ENCODE measurements at regions of chr12 and their contacts with region 1.

Region 1: DNA sequence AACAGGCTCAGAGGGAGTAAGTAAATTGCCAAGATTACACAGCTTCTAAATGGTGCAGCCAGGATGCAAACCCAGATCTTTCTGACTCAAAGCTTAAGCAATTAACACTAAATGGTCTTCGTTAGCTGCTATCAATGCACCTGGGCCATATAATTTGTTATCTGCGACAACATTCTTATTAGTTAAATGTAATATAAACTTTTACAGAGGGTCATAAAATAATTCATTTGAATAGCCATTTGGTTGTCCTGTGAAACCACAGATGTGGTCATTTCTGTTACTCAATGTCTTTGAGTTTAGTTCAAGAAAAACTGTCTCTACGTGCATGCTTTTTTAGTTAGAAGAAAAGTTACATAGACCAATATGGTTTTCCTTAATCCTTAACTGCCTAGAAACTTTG is 22.1 kb upstream of the NAP1L1 start:
- DNase-seq: no peak
- ATAC-seq: no peak
- H3K4me3 ChIP-seq: no peak overlapping the region
- H3K27ac ChIP-seq: no peak overlapping the region
- H3K4me1 ChIP-seq: peaks cover 2% of the 10 kb centered on the region
- H3K27me3 ChIP-seq: no peaks in the 10 kb centered on the region
- CTCF ChIP-seq: no peak
- POLR2A ChIP-seq: no peak
- RAD21 ChIP-seq: no peak

Region 2: DNA sequence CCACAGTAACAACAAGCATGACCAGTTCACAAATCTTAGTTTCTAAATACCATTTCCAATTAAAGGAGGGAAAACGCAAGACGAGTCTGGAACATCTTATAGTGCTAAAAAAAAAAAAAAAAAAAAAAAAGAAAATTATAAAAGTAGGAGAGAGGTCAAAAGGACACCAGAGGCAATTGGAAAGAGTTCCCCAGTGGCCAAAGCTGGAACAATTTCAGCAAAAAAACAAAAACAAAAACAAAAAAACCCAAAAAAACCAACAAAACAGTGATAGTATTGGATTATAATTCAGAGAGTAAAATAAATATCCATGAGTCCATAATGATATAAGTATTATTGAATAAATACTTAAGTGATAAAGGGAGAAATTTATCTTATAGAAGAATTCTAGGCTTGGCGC is 11.9 kb before region 1 on chr12:
- CTCF ChIA-PET with region 1: no interaction called
- POLR2A ChIA-PET with region 1: interaction called, 18 read pairs
- dilution Hi-C with region 1: no loop called
- in situ Hi-C with region 1: no loop called
- intact Hi-C with region 1: no loop called
- DNase-seq: no peak
- ATAC-seq: no peak
- H3K4me3 ChIP-seq: no peak overlapping the region
- H3K27ac ChIP-seq: no peak overlapping the region
- H3K4me1 ChIP-seq: no peaks in the 10 kb centered on the region
- H3K27me3 ChIP-seq: no peaks in the 10 kb centered on the region
- CTCF ChIP-seq: no peak
- POLR2A ChIP-seq: no peak
- RAD21 ChIP-seq: no peak

Region 3: DNA sequence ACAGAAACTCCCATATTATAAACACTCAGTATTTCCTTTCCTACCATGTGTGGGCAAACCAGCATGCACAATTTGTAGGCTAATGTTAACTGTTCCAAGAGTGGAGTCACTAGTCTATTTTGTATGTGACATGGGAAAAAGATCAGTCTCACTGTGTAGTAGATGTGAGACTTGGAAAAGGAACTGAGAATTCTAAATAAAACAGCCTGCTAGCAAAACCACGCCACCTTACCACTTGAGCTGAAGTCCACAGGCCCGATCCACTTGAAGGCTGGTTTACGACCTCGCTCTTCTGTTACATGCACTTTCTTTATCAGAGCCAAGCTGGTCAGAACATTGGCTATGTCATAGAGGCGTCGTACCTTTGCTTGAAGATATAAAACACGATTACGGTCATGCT is 936.2 kb after region 1 on chr12:
- CTCF ChIA-PET with region 1: no interaction called
- POLR2A ChIA-PET with region 1: no interaction called
- dilution Hi-C with region 1: no loop called
- in situ Hi-C with region 1: no loop called
- intact Hi-C with region 1: no loop called
- DNase-seq: no peak
- ATAC-seq: no peak
- H3K4me3 ChIP-seq: no peak overlapping the region
- H3K27ac ChIP-seq: no peak overlapping the region
- H3K4me1 ChIP-seq: no peaks in the 10 kb centered on the region
- H3K27me3 ChIP-seq: no peaks in the 10 kb centered on the region
- CTCF ChIP-seq: no peak
- POLR2A ChIP-seq: no peak
- RAD21 ChIP-seq: no peak

Measured in IMR-90 (cell line).